ENCODE measurements at regions of chr7 and their contacts with region 1.

Region 1: GRCh38 chr7:6202117-6202516 is 70.3 kb downstream of the CYTH3 start:
- H3K4me3 Mint-ChIP-seq: no peak overlapping the region
- H3K27ac Mint-ChIP-seq: no peak overlapping the region
- H3K4me1 Mint-ChIP-seq: peaks cover 9% of the 10 kb centered on the region
- H3K27me3 Mint-ChIP-seq: no peaks in the 10 kb centered on the region

Region 2: GRCh38 chr7:6237011-6237410 is 34.9 kb after region 1 on chr7:
- intact Hi-C with region 1: loop called (anchors 5 kb)
- H3K4me3 Mint-ChIP-seq: no peak overlapping the region
- H3K27ac Mint-ChIP-seq: no peak overlapping the region
- H3K4me1 Mint-ChIP-seq: peaks cover 29% of the 10 kb centered on the region
- H3K27me3 Mint-ChIP-seq: peaks cover 5% of the 10 kb centered on the region

Region 3: DNA sequence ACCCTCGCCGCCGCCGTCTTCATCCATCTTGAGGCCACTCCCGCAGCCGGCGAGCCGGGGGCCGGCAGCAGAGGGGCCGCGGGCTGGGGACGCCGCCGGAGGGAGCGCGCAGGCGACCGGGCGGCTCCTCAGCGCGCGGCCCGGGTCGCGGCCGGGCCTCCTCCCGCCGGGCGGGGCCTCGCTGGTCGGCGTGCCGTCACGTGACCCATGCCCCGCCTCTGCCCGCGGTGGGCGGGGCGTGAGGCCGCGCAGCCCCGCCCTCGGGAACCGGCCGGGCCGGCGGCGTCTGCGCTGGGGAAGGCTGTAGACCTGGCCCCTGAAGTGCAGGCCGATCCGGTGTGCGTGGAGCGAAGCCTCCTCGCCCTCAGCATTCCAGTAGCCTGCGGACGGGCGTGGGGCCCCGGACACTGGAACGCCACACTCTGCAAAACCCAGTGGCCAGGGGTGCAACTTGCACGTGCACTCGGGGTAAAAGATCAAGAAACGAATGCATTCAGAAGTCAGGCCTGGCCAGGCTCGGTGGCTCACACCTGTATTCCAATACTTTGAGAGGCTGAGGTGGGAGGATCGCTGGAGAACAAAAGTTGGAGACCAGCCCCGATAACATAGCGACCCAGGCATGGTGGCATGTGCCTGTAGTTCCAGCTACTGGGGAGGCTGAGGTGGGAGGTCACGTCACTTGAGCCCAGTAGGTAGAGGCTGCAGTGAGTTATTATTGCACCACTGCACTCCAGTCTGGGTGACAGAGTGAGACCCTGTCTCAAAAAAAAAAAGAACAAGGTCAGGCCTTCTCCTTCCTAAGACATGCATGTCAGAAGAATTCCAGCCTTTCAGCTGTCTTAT is 70.6 kb after region 1 on chr7 and contains the start of gene CYTH3:
- intact Hi-C with region 1: loop called (anchors 5 kb)
- H3K4me3 Mint-ChIP-seq: peak within 1 kb of the TSS; percentile 84
- H3K27ac Mint-ChIP-seq: peak within 1 kb of the TSS; percentile 80
- H3K4me1 Mint-ChIP-seq: peaks cover 22% of the 10 kb centered on the region
- H3K27me3 Mint-ChIP-seq: peaks cover 38% of the 10 kb centered on the region